Colonic mucosa (tissue), 4 donors: ENCODE measurements at regions of chr2 and their contacts with region 1.

Region 1: DNA sequence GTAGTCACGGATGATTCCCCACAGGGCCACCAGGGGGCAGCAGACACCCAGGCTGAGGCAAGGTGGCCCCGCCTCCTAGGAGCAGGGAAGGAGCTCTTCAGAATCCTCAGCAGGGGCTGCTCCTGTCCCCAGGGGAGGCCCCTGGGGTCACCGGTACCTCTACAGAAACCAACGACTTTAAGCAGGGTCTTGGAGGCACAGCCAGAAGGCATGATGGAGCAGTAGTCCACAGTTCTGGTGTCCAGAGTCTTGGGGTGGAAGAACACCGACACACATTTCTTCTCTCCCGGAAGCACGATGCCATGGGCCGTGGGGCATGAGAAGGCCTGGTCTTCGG is 11.5 kb downstream of the CFAP65 start:
- DNase-seq: peak; percentile 89
- H3K4me3 ChIP-seq: no peak overlapping the region
- H3K27ac ChIP-seq: no peak overlapping the region
- H3K4me1 ChIP-seq: no peaks in the 10 kb centered on the region
- H3K27me3 ChIP-seq: no peaks in the 10 kb centered on the region
- CTCF ChIP-seq: peak; percentile 99

Region 2: GRCh38 chr2:218811382-218811781 is 218.4 kb before region 1 on chr2:
- intact Hi-C with region 1: no loop called
- DNase-seq: no peak
- H3K4me3 ChIP-seq: no peak overlapping the region
- H3K27ac ChIP-seq: no peak overlapping the region
- H3K4me1 ChIP-seq: no peaks in the 10 kb centered on the region
- H3K27me3 ChIP-seq: no peaks in the 10 kb centered on the region
- CTCF ChIP-seq: no peak

Region 3: DNA sequence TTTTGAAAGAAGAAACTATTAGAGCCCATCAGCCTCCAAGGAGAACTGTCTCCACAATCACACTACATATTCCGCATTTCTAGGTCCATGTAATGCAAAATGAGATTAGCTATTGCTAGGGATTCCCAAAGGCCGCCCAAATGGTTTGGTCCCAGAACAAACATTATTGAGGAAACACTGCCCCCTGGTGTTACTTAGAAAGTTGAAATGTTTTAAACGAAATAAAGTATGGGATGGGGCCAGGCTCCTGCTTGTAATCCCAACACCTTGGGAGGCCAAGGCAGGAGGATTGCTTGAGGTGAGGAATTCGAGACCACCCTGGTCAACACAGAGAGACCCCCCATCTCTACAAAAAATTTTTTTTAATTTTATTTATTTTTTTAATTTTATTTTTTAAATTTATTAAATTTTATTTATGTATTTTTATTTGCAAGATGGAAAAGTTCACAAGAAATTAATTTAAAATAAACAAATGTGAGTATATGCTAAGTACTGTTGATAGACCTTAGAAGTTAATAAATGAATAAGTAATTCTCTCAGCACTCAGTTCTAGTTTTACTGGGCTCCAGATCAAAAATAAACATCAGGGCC is 125.4 kb after region 1 on chr2:
- intact Hi-C with region 1: loop called (anchors 5 kb)
- DNase-seq: peak; percentile 53
- H3K4me3 ChIP-seq: no peak overlapping the region
- H3K27ac ChIP-seq: no peak overlapping the region
- H3K4me1 ChIP-seq: no peaks in the 10 kb centered on the region
- H3K27me3 ChIP-seq: no peaks in the 10 kb centered on the region
- CTCF ChIP-seq: peak; percentile 50

Region 4: GRCh38 chr2:219713108-219713507 is 683.3 kb after region 1 on chr2:
- intact Hi-C with region 1: no loop called
- DNase-seq: no peak
- H3K4me3 ChIP-seq: no peak overlapping the region
- H3K27ac ChIP-seq: no peak overlapping the region
- H3K4me1 ChIP-seq: no peaks in the 10 kb centered on the region
- H3K27me3 ChIP-seq: no peaks in the 10 kb centered on the region
- CTCF ChIP-seq: no peak